PC-9 (cell line): ENCODE measurements at regions of chr3 and their contacts with region 1.

Region 1: GRCh38 chr3:48960841-48961413 is 29.1 kb upstream of the P4HTM start:
- DNase-seq: no peak
- H3K4me3 ChIP-seq: no peak overlapping the region
- H3K27ac ChIP-seq: no peak overlapping the region
- H3K4me1 ChIP-seq: no peaks in the 10 kb centered on the region
- H3K27me3 ChIP-seq: no peaks in the 10 kb centered on the region
- CTCF ChIP-seq: no peak

Region 2: DNA sequence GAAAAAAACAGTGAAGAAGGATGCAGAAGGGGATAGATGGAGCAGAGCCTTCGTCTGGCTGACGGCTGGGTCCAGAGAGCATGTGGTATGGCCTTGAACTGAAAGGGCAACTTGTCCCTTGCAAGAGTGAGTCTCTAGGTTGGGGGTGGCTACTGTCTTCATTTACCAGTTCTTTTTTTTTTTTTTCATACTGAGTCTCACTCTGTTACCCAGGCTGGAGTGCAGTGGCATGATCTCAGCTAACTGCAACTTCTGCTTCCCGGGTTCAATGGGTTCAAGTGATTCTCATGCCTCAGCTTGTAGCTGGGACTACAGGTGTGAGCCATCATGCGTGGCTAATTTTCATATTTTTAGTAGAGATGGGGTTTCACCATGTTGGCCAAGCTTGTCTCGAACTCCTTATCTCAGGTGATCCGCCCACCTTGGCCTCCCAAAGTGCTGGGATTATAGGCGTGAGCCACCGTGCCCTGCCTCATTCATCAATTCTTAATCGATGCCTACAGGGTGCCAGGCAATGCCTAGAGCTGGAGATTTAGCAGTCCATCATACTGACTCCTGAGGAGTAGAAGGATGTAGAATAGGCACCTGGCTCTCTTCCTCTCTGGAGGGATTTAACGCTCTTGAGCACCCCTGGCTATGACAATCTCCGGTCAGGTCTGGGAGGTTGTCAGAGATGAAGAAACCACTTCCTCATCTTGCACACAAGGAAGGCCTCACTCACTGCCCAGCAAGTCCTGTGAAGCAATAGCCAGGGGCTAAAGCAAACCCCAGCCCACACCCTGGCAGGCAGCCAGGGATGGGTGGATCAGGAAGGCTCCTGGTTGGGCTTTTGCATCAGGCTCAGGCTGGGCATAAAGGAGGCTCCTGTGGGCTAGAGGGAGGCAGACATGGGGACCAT is 738.1 kb before region 1 on chr3 and contains the start of gene CAMP:
- CTCF ChIA-PET with region 1: no interaction called
- POLR2A ChIA-PET with region 1: no interaction called
- intact Hi-C with region 1: no loop called
- DNase-seq: peak; percentile 95 to 98
- H3K4me3 ChIP-seq: no peak within 1 kb of the TSS
- H3K27ac ChIP-seq: peak within 1 kb of the TSS; percentile 65
- H3K4me1 ChIP-seq: peaks cover 19% of the 10 kb centered on the region
- H3K27me3 ChIP-seq: no peaks in the 10 kb centered on the region
- CTCF ChIP-seq: no peak
- total RNA-seq, gene CAMP: not detected in 2 replicates

Region 3: GRCh38 chr3:48784426-48785120 is 176.4 kb before region 1 on chr3:
- CTCF ChIA-PET with region 1: interaction called, 10 read pairs
- POLR2A ChIA-PET with region 1: no interaction called
- intact Hi-C with region 1: no loop called
- DNase-seq: no peak
- H3K4me3 ChIP-seq: no peak overlapping the region
- H3K27ac ChIP-seq: no peak overlapping the region
- H3K4me1 ChIP-seq: no peaks in the 10 kb centered on the region
- H3K27me3 ChIP-seq: no peaks in the 10 kb centered on the region
- CTCF ChIP-seq: no peak